Calu3 (cell line): ENCODE measurements at regions of chr19 and their contacts with region 1.

Region 1: DNA sequence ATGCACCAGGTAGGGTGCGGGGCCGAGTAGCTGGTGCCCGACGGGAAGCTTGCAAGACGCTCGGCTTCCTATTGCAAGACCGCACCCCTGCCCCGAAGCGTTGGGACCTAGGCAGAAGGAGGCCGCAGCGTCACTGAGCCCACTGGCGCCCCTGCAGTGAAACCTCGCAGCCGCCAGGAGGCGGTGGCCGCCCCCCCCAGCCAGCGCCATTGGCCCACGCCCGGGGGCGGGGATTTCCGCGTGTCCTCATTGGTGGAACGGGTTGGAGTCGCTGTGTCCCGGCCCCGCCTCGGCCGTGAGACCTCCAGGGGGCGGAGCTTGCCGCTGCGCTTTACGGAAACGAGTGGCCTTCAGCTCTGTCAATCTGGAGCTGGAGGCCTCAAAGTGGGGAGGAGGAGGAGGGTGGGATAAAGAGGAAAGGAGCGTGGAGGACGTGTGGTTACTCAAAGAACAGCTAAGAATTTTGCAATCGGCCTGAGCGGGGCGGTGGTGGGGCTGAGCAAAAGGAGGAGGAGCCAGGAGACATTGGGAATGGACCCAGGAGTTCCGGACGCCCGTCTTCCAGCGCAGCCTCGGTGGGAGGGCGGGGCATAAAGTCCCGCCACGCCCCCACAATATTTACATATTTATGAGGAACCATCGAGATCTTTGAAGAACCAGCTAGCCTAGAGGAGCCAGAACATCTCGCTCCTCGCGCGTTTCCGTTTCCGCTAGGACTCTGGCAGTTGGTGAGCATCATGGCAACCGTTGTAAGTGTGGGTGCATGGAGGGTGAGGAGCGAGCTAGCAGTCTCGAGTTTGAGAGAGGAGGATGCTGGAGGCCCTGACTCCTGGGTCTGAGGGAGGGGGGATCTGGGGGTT is at the starts of genes GYS1 and RUVBL2:
- DNase-seq: peak; percentile 100
- H3K4me3 Mint-ChIP-seq: peak within 1 kb of the TSS; percentile 92
- H3K27ac Mint-ChIP-seq: peak within 1 kb of the TSS; percentile 94
- H3K4me1 Mint-ChIP-seq: peaks cover 44% of the 10 kb centered on the region
- H3K27me3 Mint-ChIP-seq: no peaks in the 10 kb centered on the region
- CTCF ChIP-seq: peak; percentile 98
- total RNA-seq, gene GYS1: 59.6 and 64.7 TPM in 2 replicates
- total RNA-seq, gene RUVBL2: 184 and 199 TPM in 2 replicates

Region 2: DNA sequence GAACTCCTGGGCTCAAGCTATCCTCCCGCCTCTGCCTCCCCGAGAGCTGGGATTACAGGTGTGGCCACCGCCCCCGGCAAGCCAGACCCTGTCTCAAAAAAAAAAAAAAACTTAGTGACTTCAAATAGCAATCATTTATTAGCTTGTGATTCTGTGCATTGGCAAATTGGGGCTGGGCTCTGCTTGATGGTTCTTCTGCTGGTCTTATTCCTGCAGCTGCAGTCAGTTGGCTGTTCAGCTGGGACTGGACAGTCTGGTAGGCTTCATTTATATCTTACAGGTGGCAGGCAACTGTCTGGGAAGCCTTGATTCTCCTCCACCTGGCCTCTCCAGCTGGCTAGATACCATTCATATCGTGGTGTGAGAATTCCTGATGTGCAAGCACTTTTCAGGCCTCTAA is 52.5 kb before region 1 on chr19:
- CTCF ChIA-PET with region 1: no interaction called
- intact Hi-C with region 1: no loop called
- DNase-seq: no peak
- H3K4me3 Mint-ChIP-seq: no peak overlapping the region
- H3K27ac Mint-ChIP-seq: no peak overlapping the region
- H3K4me1 Mint-ChIP-seq: no peaks in the 10 kb centered on the region
- H3K27me3 Mint-ChIP-seq: no peaks in the 10 kb centered on the region
- CTCF ChIP-seq: no peak

Region 3: GRCh38 chr19:48975947-48976847 is 17.2 kb before region 1 on chr19:
- CTCF ChIA-PET with region 1: interaction called, 16 read pairs
- intact Hi-C with region 1: no loop called
- DNase-seq: no peak
- H3K4me3 Mint-ChIP-seq: no peak overlapping the region
- H3K27ac Mint-ChIP-seq: no peak overlapping the region
- H3K4me1 Mint-ChIP-seq: no peaks in the 10 kb centered on the region
- H3K27me3 Mint-ChIP-seq: no peaks in the 10 kb centered on the region
- CTCF ChIP-seq: no peak

Region 4: DNA sequence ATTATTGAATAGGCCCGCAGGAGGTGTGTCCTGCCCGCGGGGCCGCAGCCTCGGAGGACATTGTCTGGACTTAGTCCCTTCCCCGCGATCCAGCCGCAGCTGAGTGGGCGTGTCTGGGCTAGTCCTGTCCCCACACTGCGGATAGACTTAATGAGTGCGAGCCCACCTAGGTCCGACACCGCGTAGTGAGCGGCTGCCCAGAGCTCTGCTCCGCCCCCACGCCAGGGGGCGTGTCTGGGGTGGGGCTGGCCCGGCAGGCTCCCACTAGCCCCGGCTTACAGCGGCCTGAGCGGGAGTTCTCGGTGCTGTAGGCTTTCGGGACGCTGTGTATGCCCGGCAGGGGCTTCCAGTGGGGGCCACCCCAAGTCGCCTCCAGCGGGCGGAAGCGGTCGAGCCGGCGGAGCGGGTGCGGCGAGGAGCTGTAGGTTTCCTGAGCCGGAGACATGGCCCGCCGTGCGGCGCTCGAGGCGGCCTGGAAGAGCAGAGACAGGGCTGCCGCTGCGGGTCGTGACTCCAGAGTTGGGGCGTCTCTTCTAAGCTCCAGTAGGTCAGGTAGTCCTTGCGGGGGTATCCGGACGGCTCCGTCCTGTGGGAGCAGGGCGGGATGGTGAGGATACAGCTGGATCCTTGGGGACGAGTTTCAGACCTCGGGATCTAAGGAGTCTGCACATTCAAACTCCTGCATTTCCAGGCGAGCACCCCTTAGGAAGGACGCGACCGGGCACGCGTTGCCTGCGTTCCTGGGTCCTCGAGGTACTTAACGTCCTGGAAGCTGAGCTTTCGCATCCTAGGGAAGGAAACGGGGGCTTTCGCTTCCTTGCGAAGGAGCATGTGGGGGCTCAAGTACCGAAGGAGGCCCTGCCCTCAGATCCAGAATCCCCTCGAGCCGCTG is 62.9 kb after region 1 on chr19:
- CTCF ChIA-PET with region 1: interaction called, 10 read pairs
- intact Hi-C with region 1: no loop called
- DNase-seq: peak; percentile 85
- H3K4me3 Mint-ChIP-seq: peak overlapping the region; percentile 95
- H3K27ac Mint-ChIP-seq: no peak overlapping the region
- H3K4me1 Mint-ChIP-seq: peaks cover 20% of the 10 kb centered on the region
- H3K27me3 Mint-ChIP-seq: peaks cover 16% of the 10 kb centered on the region
- CTCF ChIP-seq: peak; percentile 53

Region 5: GRCh38 chr19:49097455-49098288 is 104.3 kb after region 1 on chr19:
- CTCF ChIA-PET with region 1: interaction called, 12 read pairs
- intact Hi-C with region 1: no loop called
- DNase-seq: peak; percentile 85
- H3K4me3 Mint-ChIP-seq: no peak overlapping the region
- H3K27ac Mint-ChIP-seq: no peak overlapping the region
- H3K4me1 Mint-ChIP-seq: peaks cover 7% of the 10 kb centered on the region
- H3K27me3 Mint-ChIP-seq: no peaks in the 10 kb centered on the region
- CTCF ChIP-seq: peak; percentile 99